ENCODE measurements at regions of chr4 and their contacts with region 1.

Region 1: GRCh38 chr4:173013232-173013930 is 155.2 kb upstream of the GALNT7 start:
- DNase-seq: peak; percentile 46
- H3K4me3 Mint-ChIP-seq: no peak overlapping the region
- H3K27ac Mint-ChIP-seq: no peak overlapping the region
- H3K4me1 Mint-ChIP-seq: no peaks in the 10 kb centered on the region
- H3K27me3 Mint-ChIP-seq: no peaks in the 10 kb centered on the region
- CTCF ChIP-seq: peak; percentile 59

Region 2: DNA sequence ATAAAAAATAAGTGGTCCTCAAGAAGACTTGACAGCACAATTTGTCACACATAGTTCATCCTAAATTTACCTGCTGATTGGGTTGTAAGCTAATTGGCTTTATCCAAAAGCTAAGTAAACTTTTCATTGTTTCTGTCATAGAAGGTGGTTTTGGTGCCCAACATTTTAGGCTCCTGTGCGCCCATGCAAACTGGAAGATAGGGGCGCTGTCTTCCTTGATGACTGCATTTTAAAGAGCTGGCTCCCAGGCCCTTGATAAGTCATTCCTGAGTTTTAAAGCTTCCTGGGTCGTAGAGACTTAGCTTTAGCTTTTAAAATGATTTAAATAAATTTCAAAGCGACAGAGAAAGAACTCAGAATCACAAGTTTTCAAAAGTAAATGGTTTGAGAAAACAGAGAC is 470.1 kb before region 1 on chr4:
- CTCF ChIA-PET with region 1: no interaction called
- POLR2A ChIA-PET with region 1: no interaction called
- intact Hi-C with region 1: no loop called
- DNase-seq: no peak
- H3K4me3 Mint-ChIP-seq: no peak overlapping the region
- H3K27ac Mint-ChIP-seq: no peak overlapping the region
- H3K4me1 Mint-ChIP-seq: no peaks in the 10 kb centered on the region
- H3K27me3 Mint-ChIP-seq: peaks cover 29% of the 10 kb centered on the region
- CTCF ChIP-seq: no peak

Region 3: DNA sequence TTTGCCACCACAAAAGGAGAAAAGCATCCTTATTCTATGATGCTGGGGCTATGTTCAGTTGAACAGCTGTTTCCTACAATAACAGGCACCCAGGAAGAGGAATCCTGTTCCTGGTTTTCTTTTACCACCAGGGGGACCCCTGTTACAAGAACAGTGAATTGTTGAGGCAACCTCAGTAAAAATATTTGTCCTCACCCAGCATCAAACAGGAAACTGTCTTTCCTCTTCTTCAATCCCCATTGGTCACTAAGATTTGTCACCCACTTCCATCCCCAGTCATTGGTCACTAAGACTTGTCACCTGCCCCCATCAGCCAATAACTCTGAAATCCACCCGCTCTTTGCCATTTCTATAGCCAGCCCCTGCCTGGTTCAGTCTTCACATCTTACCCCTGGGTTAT is 11.8 kb after region 1 on chr4:
- CTCF ChIA-PET with region 1: interaction called, 38 read pairs
- POLR2A ChIA-PET with region 1: interaction called, 8 read pairs
- intact Hi-C with region 1: no loop called
- DNase-seq: peak; percentile 81
- H3K4me3 Mint-ChIP-seq: no peak overlapping the region
- H3K27ac Mint-ChIP-seq: no peak overlapping the region
- H3K4me1 Mint-ChIP-seq: no peaks in the 10 kb centered on the region
- H3K27me3 Mint-ChIP-seq: no peaks in the 10 kb centered on the region
- CTCF ChIP-seq: peak; percentile 74

Region 4: DNA sequence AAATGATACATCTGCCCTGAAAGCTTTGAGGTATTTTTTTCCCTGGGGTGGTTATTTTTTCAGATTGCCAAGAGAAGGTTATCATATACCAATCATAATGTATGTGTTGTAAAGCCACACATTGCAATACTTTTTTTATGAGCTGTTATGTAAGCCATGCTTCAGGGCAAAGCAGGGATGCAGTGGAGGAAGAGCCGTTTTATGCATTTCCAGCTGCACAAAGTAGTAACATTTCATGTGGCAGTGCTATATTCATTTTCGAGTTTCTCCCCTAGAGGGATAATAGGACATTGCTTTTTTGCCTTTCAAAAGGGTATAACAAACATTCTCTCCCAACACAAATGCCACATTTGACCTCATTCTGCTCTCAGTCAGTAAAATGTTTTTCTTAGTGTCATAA is 223.8 kb after region 1 on chr4:
- CTCF ChIA-PET with region 1: interaction called, 13 read pairs
- POLR2A ChIA-PET with region 1: interaction called, 3 read pairs
- intact Hi-C with region 1: no loop called
- DNase-seq: no peak
- H3K4me3 Mint-ChIP-seq: no peak overlapping the region
- H3K27ac Mint-ChIP-seq: no peak overlapping the region
- H3K4me1 Mint-ChIP-seq: peaks cover 5% of the 10 kb centered on the region
- H3K27me3 Mint-ChIP-seq: no peaks in the 10 kb centered on the region
- CTCF ChIP-seq: no peak

Region 5: GRCh38 chr4:173264684-173265185 is 251.4 kb after region 1 on chr4:
- CTCF ChIA-PET with region 1: interaction called, 21 read pairs
- POLR2A ChIA-PET with region 1: no interaction called
- intact Hi-C with region 1: no loop called
- DNase-seq: no peak
- H3K4me3 Mint-ChIP-seq: no peak overlapping the region
- H3K27ac Mint-ChIP-seq: no peak overlapping the region
- H3K4me1 Mint-ChIP-seq: peaks cover 9% of the 10 kb centered on the region
- H3K27me3 Mint-ChIP-seq: no peaks in the 10 kb centered on the region
- CTCF ChIP-seq: no peak

Region 6: DNA sequence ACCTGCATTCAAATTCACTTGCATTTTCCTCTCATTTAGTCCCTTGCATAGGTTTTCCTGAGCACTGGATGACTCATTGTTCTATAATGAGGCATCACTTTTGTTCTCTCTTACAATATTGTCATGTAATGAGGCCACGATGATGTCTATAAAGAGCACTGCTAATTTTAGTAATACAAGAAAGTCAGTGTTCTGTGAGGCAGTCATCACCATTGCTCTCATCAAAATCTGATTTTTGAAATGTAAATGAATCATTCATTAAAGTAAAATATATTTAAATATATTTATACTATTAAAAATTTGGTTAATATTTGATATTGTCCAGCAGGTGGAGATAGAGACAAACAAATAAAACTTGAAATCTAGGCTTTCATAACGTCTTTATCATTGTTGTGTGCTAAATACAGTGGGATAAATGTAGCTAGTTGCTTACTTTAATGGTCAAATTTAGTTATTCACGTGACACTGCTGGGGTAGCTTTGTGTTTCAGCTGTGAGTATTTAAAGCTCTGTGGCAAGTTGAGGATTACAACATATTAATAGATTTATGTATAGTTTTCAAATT is 305.3 kb after region 1 on chr4:
- CTCF ChIA-PET with region 1: interaction called, 3 read pairs
- POLR2A ChIA-PET with region 1: no interaction called
- intact Hi-C with region 1: loop called (anchors 5 kb)
- DNase-seq: peak; percentile 56
- H3K4me3 Mint-ChIP-seq: no peak overlapping the region
- H3K27ac Mint-ChIP-seq: no peak overlapping the region
- H3K4me1 Mint-ChIP-seq: peaks cover 12% of the 10 kb centered on the region
- H3K27me3 Mint-ChIP-seq: no peaks in the 10 kb centered on the region
- CTCF ChIP-seq: peak; percentile 46

Region 7: GRCh38 chr4:174086829-174087799 is 1073.7 kb after region 1 on chr4:
- CTCF ChIA-PET with region 1: no interaction called
- POLR2A ChIA-PET with region 1: no interaction called
- intact Hi-C with region 1: no loop called
- DNase-seq: no peak
- H3K4me3 Mint-ChIP-seq: no peak overlapping the region
- H3K27ac Mint-ChIP-seq: no peak overlapping the region
- H3K4me1 Mint-ChIP-seq: no peaks in the 10 kb centered on the region
- H3K27me3 Mint-ChIP-seq: peaks cover 59% of the 10 kb centered on the region
- CTCF ChIP-seq: no peak